Thyroid gland (tissue), 4 donors: ENCODE measurements at regions of chr1 and their contacts with region 1.

Region 1: GRCh38 chr1:41268154-41268770 is 26.2 kb upstream of the SCMH1 start:
- DNase-seq: peak; percentile 77 to 85
- H3K4me3 ChIP-seq: no peak overlapping the region
- H3K27ac ChIP-seq: no peak overlapping the region
- H3K4me1 ChIP-seq: peaks cover 0 to 3% of the 10 kb centered on the region in 2 donors
- H3K27me3 ChIP-seq: no peaks in the 10 kb centered on the region
- CTCF ChIP-seq: peak; percentile 93 to 98 (median 98)
- POLR2A ChIP-seq: no peak

Region 2: GRCh38 chr1:41226815-41227434 is 41.3 kb before region 1 on chr1:
- intact Hi-C with region 1: no loop called
- DNase-seq: no peak
- H3K4me3 ChIP-seq: no peak overlapping the region
- H3K27ac ChIP-seq: no peak overlapping the region
- H3K4me1 ChIP-seq: peaks cover 5 to 9% of the 10 kb centered on the region in 2 donors
- H3K27me3 ChIP-seq: no peaks in the 10 kb centered on the region
- CTCF ChIP-seq: no peak
- POLR2A ChIP-seq: no peak

Region 3: DNA sequence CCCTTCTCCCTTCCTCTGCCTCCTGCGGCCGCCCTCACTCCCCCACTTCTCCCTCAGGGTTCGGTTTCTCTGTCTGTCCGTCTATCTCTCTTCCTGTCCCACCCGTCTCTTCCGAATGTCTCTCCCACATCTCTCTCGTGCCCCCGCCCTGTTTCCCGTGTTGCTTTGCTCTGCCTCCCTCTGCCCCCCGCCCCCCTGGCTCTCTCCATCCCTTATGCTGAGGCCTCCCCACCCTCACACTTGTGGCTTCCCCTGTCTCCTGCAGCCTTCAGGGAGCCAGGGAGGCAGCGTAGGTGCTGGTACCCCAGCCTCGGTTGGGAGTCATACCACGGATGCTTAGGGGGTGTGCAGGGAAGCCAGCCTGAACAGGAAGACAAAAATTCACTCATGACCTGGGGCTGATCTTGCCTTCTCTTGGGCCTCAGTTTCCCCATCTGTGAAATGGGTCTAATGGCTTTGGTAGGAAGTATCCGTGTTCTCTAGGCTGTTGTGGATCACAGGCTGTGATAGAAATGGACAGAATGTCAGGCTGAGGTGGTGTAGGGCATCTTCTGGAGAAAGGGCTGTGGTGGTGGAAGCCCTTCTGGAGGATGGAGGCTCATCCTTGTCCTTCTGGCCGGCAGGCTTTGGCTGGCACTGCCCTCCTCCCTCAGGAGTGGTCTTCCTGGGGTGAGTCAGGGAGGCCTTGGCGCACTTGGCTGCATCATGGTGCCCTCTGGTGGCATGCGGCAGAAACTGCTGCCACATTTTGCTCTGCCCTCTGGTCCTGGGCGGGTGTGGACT is 148.5 kb after region 1 on chr1:
- intact Hi-C with region 1: loop called (anchors 2 kb)
- DNase-seq: peak; percentile 60
- H3K4me3 ChIP-seq: no peak overlapping the region
- H3K27ac ChIP-seq: no peak overlapping the region
- H3K4me1 ChIP-seq: peaks cover 0 to 9% of the 10 kb centered on the region in 2 donors
- H3K27me3 ChIP-seq: no peaks in the 10 kb centered on the region
- CTCF ChIP-seq: peak; percentile 72 to 96 (median 89)
- POLR2A ChIP-seq: no peak